Right cardiac atrium (tissue), 5 donors: ENCODE measurements at regions of chr11 and their contacts with region 1.

Region 1: GRCh38 chr11:9170450-9170849 is 79.1 kb upstream of the SCUBE2 start:
- DNase-seq: no peak
- ATAC-seq: peak in 1 of 2 donors; percentile 51
- H3K4me3 ChIP-seq: no peak overlapping the region
- H3K27ac ChIP-seq: no peak overlapping the region
- H3K4me1 ChIP-seq: peaks cover 2% of the 10 kb centered on the region
- H3K27me3 ChIP-seq: no peaks in the 10 kb centered on the region

Region 2: DNA sequence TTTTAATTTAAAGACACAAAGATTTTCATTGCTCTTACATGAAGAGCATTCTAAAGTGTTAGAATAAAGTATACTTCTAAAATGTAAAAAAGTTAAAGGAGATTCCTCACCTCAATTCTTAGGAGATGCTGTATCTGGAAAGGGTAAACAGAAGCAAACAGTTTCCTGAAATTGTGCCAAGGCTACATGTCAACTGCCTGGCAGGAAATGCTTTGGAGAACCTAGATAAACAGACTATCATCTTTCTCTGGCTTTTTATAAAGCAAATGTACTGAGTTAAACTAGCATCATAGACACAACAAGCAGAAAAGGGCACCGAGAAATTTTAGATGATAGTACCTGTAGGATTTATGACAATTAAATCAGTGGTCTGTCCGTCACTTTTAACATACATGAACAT is 284.1 kb before region 1 on chr11:
- intact Hi-C with region 1: no loop called
- DNase-seq: no peak
- ATAC-seq: no peak
- H3K4me3 ChIP-seq: no peak overlapping the region
- H3K27ac ChIP-seq: no peak overlapping the region
- H3K4me1 ChIP-seq: no peaks in the 10 kb centered on the region
- H3K27me3 ChIP-seq: no peaks in the 10 kb centered on the region

Region 3: DNA sequence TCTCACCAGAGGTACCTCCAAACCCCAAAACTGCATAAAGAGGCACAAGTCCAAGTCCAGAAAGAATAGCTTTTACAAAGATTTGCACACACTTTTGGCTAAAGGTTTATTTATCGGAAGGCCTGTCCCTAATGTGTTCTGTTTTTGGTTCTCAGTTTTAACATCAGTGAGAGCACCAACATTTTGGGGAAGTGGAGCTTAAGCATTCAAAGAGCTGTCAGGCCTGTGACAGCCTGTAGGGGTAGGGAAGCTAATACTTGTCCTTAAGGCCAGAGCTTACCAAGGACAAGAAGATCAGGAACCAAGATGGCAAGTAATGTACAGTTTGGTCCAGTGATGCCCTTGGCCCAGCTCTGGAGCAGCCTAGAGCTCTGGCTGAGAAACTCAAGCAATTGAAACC is 40.2 kb before region 1 on chr11:
- intact Hi-C with region 1: no loop called
- DNase-seq: no peak
- ATAC-seq: no peak
- H3K4me3 ChIP-seq: no peak overlapping the region
- H3K27ac ChIP-seq: no peak overlapping the region
- H3K4me1 ChIP-seq: no peaks in the 10 kb centered on the region
- H3K27me3 ChIP-seq: no peaks in the 10 kb centered on the region

Region 4: DNA sequence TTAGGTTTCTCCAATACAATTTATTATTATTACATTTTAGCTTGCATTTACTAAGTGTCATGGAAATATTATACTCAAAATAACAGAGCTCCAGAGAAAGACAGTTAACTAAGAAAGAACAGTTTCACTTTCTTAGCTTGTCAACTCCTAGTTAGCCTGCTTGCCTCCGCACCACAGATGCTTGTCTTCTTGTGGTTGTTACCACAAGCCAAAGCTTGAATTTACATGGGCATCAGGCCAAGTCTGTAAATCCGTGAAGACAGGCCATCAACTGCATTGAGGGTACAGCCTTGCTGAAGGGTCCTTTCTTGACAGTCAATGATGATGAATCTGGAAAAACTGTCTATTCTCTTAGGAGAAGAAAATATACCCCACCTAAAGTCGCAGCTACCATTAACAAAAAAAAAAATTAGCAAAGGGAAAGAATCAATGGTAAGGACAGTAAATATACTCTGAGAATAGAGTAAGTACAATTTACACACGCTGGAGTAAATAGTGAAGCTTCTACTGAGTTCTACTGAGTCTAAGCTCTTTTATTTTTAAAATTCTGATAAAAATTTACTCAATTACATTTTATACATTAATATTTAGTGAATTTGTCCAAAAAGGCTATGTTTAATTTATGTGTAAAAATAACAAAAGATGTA is 110.3 kb after region 1 on chr11:
- intact Hi-C with region 1: loop called in 1 of 4 experiments (anchors 10 kb)
- DNase-seq: no peak
- ATAC-seq: peak in 1 of 2 donors; percentile 31
- H3K4me3 ChIP-seq: no peak overlapping the region
- H3K27ac ChIP-seq: no peak overlapping the region
- H3K4me1 ChIP-seq: no peaks in the 10 kb centered on the region
- H3K27me3 ChIP-seq: no peaks in the 10 kb centered on the region

Region 5: DNA sequence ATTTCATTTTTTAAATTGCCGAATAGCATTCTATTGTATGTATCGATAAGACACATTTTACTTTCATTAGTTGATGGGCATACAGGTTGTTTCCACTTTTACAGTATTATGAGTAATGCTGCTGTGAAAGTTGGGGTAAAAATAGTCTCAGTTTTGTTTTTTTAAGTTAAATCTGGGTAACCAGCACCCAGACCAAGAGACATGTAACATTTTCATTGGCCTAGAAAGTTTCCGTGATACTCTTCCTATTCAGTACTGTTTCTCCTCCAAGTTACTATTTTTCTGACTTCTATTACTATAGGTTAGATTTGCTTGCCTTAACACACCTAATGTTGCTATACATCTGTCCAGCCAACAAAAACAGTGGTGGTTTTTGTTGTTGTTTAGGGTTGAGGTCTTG is 226.3 kb after region 1 on chr11:
- intact Hi-C with region 1: no loop called
- DNase-seq: no peak
- ATAC-seq: no peak
- H3K4me3 ChIP-seq: no peak overlapping the region
- H3K27ac ChIP-seq: no peak overlapping the region
- H3K4me1 ChIP-seq: peaks cover 1% of the 10 kb centered on the region
- H3K27me3 ChIP-seq: no peaks in the 10 kb centered on the region